ENCODE measurements at regions of chr4 and their contacts with region 1.

Region 1: DNA sequence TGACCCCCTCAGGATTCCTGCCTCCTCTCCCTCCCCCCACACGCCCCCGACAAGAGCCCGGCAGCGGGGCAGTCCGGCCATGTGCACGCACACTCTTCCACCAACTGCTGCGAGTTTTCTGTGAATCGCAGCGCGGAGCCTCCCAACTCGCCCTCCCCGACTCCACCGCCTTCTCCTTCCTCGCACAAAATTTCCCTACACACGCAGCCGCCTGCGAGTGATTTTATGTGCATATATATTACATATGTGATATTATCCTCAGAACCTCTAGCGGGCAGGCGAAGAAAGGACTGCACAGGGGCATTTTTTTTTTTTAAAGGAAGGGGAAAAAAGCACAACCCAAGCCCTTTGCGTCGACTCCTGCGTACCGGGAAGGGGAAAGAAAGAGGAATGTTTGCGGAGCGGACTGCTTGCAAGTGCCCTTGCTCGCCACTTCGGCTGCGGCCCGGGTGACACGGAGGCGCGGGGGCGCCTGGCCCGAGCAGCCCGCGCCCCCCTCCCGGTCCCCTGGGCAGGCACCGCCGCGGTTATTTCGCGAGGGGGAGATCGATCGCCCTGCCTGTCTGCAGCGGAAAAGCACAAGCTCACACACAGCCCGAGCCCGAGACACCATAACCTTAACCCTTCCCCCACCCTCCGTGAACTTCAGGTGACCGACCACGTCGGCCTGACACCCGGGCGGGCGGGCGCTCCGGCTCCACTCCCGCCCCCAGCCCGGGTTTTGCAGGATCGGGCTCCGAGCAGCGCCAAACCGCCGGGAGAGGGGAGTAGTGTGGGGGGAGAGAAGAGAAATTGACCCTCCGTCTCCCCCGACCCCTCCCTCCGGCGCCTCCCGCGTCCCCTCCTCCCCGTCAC is 2.3 kb downstream of the ZNF827 start:
- DNase-seq: peak; percentile 41
- H3K4me3 Mint-ChIP-seq: peak overlapping the region; percentile 95
- H3K27ac Mint-ChIP-seq: peak overlapping the region; percentile 96
- H3K4me1 Mint-ChIP-seq: peaks cover 48% of the 10 kb centered on the region
- H3K27me3 Mint-ChIP-seq: peaks cover 3% of the 10 kb centered on the region

Region 2: DNA sequence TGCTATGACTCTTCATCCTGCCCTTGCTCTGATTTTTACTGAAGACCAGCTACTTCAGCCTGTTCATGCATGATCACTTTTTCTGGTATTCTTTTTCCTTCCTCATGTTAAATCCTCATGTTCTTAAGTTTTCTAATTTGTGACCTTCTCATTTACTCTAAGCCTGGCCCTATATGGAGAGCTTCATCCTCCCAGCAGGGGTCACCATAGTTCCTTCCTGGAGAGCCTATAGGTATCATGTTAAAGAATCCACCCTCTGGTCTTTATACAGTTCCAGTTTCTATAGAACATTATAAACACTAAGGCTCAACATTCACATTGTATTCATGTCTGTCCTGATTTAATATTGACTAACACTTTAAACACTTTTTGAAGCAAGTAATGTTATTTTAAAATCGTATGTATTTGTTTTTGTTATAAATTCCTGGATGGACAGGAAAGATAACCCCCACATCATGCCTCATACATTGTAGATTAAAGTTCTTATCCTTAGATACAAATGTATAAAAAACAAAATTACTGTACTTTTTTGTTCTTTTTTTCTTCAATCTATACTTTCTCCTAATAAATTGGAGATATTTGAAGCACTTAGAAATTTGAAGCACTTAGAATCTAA is 702.2 kb before region 1 on chr4:
- intact Hi-C with region 1: loop called (anchors 10 kb)
- DNase-seq: peak; percentile 20
- H3K4me3 Mint-ChIP-seq: no peak overlapping the region
- H3K27ac Mint-ChIP-seq: no peak overlapping the region
- H3K4me1 Mint-ChIP-seq: no peaks in the 10 kb centered on the region
- H3K27me3 Mint-ChIP-seq: peaks cover 7% of the 10 kb centered on the region

Region 3: DNA sequence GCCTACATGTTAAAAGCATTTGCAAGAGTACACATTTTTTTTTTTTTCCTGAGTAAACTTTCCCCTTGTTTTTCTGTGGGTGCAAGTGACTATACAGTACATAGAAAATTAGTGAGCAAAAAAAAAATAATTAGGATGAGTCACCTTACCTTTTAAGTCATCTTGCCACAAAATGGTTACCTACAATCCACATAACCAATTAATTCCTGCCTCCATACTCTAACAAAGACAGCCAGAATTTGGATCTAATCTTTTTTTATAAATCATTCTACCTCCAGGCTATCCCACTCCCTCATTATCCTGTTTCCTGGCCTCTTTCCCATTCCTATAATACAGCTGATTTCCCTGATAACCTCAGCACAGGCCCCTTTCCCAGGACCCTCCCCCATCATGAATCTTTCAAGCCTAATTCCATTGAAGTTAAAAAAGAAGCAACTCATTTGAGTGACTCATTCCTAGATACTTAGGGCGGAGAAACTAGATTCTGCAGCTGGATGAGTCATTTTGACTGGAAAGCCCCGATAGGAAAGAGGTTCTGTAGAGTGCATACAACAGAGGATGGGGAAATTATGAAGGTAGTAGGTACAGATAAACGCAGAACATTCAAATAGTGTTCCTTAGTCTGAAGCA is 128.2 kb before region 1 on chr4:
- intact Hi-C with region 1: loop called (anchors 1 kb)
- DNase-seq: peak; percentile 56
- H3K4me3 Mint-ChIP-seq: peak overlapping the region; percentile 49
- H3K27ac Mint-ChIP-seq: peak overlapping the region; percentile 96
- H3K4me1 Mint-ChIP-seq: peaks cover 47% of the 10 kb centered on the region
- H3K27me3 Mint-ChIP-seq: no peaks in the 10 kb centered on the region

Region 4: GRCh38 chr4:145851511-145852201 is 84.7 kb before region 1 on chr4:
- intact Hi-C with region 1: no loop called
- DNase-seq: no peak
- H3K4me3 Mint-ChIP-seq: no peak overlapping the region
- H3K27ac Mint-ChIP-seq: peak overlapping the region; percentile 32
- H3K4me1 Mint-ChIP-seq: peaks cover 8% of the 10 kb centered on the region
- H3K27me3 Mint-ChIP-seq: no peaks in the 10 kb centered on the region

Region 5: DNA sequence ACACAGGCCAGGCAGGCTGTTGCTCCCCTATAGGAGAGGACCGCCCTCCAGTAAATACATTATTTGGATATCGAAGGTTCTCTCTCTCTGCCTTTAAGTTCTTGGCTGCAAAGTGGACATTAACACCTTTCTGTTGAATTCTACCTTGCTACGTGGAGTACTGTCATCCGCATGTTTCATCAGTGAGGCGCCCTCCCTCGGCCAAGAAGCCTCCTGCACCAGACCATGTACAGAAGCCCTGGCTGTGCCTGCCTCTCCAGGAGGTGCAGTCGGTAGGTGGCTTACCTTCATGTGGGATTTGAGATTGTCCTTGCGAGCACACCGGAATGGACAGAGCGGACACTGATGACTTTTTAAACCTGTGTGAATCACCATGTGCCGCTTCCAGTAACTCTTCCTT is 44.4 kb before region 1 on chr4:
- intact Hi-C with region 1: loop called (anchors 2 kb)
- DNase-seq: no peak
- H3K4me3 Mint-ChIP-seq: no peak overlapping the region
- H3K27ac Mint-ChIP-seq: no peak overlapping the region
- H3K4me1 Mint-ChIP-seq: peaks cover 22% of the 10 kb centered on the region
- H3K27me3 Mint-ChIP-seq: no peaks in the 10 kb centered on the region

Region 6: DNA sequence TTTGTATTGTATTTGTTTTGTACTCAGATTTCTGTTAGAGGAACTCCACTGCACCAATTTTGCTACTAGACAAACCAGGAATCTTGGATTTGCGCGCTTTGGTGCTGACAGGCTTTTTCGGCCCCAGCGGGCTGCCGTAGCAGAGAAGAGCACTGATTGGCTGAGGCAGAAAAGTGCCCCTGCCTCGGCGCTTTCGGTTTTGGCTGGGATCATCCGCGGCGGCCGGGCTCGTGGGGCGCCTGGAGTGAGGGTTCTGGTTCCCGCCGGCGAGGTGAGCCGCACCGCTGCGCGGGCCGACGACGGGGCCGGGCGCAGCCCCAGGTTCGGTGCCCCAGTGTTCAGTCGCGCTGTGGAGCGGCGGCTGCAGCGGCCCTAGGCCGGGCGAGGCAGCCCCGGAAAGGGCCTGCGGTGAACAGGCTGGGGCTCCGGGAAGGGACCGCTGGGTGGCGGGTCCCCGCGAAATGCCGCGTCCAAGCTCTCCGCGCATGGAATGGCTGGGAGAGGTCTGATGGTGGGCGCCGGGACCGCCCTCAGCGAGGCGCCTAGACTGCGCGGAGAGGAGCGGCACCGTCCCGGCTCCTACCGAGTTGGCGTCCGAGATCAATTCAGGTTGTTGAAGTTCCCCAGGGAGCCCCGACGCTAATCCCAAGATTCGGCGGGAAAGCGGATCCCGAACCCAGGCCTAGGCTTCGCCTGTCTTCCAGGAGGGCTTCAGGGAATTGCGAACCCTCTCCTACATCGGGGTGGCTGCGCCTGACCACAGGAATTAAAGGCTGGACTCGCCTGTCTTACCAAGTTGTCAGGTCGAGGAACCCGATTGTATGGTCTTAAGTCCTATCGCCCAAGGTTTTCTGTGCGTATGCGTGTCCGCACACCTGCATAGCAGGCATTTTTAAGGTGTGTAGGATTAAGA is 239.4 kb after region 1 on chr4 and contains the start of gene LSM6:
- intact Hi-C with region 1: loop called (anchors 1 kb)
- DNase-seq: peak; percentile 77
- H3K4me3 Mint-ChIP-seq: peak within 1 kb of the TSS; percentile 88
- H3K27ac Mint-ChIP-seq: peak within 1 kb of the TSS; percentile 81
- H3K4me1 Mint-ChIP-seq: peaks cover 40% of the 10 kb centered on the region
- H3K27me3 Mint-ChIP-seq: no peaks in the 10 kb centered on the region
- total RNA-seq, gene LSM6: 62.9 and 65.0 TPM in 2 replicates